Activated CD8-positive, alpha-beta T cell treated with anti-CD3 and anti-CD28 coated beads for 36 hours (primary cell): ENCODE measurements at regions of chr7 and their contacts with region 1.

Region 1: DNA sequence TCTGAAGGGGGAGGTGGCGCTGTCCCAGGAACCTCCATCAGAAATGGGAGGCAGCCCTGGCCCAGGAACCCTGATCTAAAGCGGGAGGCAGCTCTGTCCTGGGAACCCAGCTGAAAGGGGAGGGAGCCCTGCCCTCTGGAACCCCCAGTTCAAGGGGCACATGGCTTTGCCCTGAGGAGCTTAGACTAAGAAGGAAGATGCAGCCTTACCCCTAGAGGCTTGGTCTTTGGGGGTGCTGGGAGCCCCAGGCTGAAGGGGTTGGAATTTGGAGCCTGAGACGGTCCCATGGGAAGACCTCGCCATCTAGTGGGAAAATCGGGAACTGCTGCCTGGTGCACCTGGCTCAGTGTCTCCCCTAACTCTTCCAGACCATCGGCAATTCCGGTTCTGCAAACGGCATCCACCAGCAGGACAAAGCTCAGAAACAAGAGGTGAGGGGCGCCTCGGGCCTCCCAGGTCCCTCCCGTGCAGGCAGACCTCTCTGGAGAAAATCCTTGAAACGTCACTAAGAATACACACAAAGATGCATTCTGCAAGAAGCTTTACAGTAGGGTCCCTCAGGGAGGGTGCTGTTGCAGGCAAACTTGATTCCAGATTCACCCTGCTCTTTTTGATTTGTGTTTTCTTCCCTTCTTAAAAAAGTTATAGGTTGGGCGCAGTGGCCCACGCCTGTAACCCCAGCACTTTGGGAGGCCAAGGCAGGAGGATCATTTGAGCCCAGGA is 52.4 kb upstream of the GTF2IRD1 start:
- DNase-seq: peak; percentile 81
- ATAC-seq: peak; percentile 82
- H3K4me3 Mint-ChIP-seq: no peak overlapping the region
- H3K27ac Mint-ChIP-seq: no peak overlapping the region
- H3K4me1 Mint-ChIP-seq: no peaks in the 10 kb centered on the region
- H3K27me3 Mint-ChIP-seq: no peaks in the 10 kb centered on the region
- CTCF ChIP-seq: peak; percentile 93

Region 2: DNA sequence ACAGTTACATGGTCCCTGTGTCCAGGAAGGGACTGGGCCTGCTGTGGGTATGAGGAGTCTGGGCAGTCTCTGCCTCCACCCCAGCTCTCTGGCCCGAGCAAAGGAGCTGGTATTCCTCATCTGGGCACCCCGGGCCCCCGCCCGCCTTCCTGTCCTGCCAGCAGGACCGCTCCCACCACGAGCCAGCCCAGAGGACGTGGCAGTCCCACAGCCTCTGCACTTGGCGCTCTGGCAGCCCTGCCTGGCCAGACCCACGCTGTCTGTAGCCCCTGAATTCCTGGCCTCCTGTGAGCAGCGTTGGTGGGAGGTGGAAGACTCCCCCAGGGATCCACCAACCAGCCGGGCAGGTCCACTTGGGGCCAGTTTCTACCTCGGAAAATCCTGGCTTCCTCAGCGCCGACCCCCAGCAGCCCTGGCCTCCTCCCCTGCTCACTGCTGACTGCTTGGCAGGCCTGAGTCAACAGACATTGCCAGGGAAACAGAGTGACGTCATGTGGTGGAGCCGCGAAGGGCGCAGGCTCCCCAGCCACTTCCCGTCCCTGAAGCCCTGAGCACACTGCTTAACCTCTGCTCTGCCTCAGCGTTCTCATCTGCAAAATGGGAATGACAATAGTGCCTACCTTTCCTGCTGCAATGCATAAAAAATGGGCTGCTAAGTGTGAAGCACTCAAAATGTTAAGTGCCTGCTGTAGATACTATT is 339.3 kb before region 1 on chr7:
- CTCF ChIA-PET with region 1: interaction called, 10 read pairs
- POLR2A ChIA-PET with region 1: no interaction called
- intact Hi-C with region 1: loop called (anchors 10 kb)
- DNase-seq: peak; percentile 70
- ATAC-seq: peak; percentile 97
- H3K4me3 Mint-ChIP-seq: no peak overlapping the region
- H3K27ac Mint-ChIP-seq: peak overlapping the region; percentile 78
- H3K4me1 Mint-ChIP-seq: peaks cover 5% of the 10 kb centered on the region
- H3K27me3 Mint-ChIP-seq: no peaks in the 10 kb centered on the region
- CTCF ChIP-seq: no peak

Region 3: GRCh38 chr7:74115326-74115725 is 286.0 kb before region 1 on chr7:
- CTCF ChIA-PET with region 1: no interaction called
- POLR2A ChIA-PET with region 1: no interaction called
- intact Hi-C with region 1: no loop called
- DNase-seq: no peak
- ATAC-seq: no peak
- H3K4me3 Mint-ChIP-seq: no peak overlapping the region
- H3K27ac Mint-ChIP-seq: no peak overlapping the region
- H3K4me1 Mint-ChIP-seq: no peaks in the 10 kb centered on the region
- H3K27me3 Mint-ChIP-seq: no peaks in the 10 kb centered on the region
- CTCF ChIP-seq: no peak

Region 4: DNA sequence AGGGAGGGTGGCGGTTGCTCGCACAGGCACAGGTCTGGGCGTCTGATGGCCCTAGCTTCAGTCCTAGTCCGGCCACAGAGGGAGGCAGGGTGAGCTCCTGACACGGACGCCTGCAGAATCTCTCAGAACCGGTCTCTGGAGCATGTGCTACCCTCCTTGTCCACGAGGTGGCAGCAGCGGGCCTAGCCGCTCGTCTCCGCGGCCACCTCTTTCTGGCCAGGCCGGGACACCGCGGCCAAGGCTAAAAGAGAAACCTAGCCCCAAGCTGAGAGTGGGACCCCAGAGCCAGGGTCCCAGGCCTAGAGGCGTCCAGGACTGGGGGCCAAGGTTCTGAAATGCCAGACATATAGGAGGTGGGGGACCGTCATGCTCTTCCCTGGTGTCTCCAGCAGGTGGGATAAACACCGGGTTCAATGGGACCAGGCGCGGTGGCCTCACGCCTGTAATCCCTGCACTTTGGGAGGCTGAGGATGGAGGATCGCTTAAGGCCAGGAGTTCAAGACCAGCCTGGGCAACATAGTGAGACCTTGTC is 194.6 kb before region 1 on chr7:
- CTCF ChIA-PET with region 1: interaction called, 197 read pairs
- POLR2A ChIA-PET with region 1: no interaction called
- intact Hi-C with region 1: loop called (anchors 2 kb)
- DNase-seq: peak; percentile 87
- ATAC-seq: peak; percentile 82
- H3K4me3 Mint-ChIP-seq: no peak overlapping the region
- H3K27ac Mint-ChIP-seq: no peak overlapping the region
- H3K4me1 Mint-ChIP-seq: peaks cover 15% of the 10 kb centered on the region
- H3K27me3 Mint-ChIP-seq: peaks cover 5% of the 10 kb centered on the region
- CTCF ChIP-seq: peak; percentile 99

Region 5: DNA sequence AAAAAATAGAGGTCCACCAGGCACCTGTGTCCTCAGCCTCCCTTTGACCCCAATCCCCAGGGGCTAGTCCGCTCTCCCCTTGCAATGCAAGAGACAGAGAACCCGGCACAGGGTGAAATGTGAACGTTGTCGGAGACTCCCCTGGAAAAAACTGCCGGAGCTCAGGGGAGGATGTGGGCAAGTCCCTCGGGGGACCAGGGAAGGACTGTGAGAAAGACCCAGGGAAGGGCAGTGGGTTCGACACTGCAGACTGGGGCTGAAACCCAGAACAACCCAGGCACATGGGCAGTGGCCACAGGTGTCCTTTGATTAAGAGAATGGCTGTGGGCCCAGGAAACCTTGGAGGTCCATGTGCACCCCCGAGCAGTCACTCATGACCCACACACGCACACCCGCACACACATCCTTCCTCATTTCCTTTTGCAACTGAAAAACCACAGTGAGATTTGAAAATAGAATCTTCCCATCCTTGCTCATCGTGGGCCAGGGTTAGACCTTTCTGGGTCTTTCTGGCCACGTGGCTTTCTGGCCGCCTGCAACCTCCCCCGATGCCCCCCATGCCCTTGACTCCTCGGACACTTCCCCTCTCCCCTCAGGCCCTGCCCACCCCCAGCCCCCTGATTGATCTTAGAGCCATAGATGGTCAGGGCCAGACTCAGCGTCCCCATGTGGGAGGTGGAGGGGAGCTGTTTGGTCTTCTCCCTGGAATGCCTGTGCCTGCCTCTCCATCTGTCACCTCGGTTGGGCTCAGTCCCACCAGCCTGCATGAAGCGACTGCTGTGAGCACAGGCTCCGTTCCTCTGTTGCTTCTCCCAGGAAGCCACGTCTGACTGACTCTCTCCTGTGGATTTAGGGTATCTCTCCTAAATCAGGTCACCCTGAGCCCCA is 183.6 kb before region 1 on chr7:
- CTCF ChIA-PET with region 1: interaction called, 16 read pairs
- POLR2A ChIA-PET with region 1: no interaction called
- intact Hi-C with region 1: no loop called
- DNase-seq: peak; percentile 56
- ATAC-seq: peak; percentile 55
- H3K4me3 Mint-ChIP-seq: peak overlapping the region; percentile 8
- H3K27ac Mint-ChIP-seq: peak overlapping the region; percentile 73
- H3K4me1 Mint-ChIP-seq: peaks cover 16% of the 10 kb centered on the region
- H3K27me3 Mint-ChIP-seq: no peaks in the 10 kb centered on the region
- CTCF ChIP-seq: no peak

Region 6: DNA sequence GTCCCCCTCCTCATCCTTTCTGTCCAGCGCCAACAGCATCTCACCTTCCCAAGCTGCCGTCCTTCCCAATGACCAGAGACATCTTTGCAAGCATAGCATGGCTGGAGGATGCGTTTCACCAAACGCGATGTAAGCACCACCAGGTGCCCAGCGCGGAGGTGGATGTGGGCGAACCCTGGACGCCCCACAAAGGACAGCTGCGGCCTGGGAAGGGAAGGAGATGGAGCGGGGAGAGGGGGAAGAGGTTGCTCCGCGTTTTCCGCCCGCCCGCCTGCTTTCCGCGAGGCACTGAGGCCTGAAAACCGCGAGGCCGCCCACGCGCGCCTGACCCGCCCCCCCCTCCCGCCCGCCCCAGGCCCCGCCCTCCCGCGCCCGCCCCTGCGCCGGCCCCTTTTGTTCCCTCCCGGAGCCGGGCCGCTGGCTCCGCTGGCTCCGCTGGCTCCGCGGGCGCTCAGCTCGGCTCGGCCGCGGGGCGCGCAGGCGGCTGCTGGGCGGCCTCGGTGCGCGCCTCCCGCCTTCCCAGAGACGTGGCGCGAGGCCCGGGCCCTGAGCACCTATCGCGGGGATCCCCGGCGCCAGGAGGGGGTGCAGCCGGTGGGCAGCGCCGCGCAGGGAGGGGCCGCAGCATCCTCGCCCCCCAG is 112.2 kb before region 1 on chr7 and contains the start of gene CLIP2:
- CTCF ChIA-PET with region 1: interaction called, 23 read pairs
- POLR2A ChIA-PET with region 1: no interaction called
- intact Hi-C with region 1: no loop called
- DNase-seq: peak; percentile 74
- ATAC-seq: peak; percentile 89
- H3K4me3 Mint-ChIP-seq: peak within 1 kb of the TSS; percentile 65
- H3K27ac Mint-ChIP-seq: peak within 1 kb of the TSS; percentile 55
- H3K4me1 Mint-ChIP-seq: peaks cover 12% of the 10 kb centered on the region
- H3K27me3 Mint-ChIP-seq: peaks cover 18% of the 10 kb centered on the region
- CTCF ChIP-seq: no peak
- total RNA-seq, gene CLIP2: 1.3 to 1.4 TPM

Region 7: DNA sequence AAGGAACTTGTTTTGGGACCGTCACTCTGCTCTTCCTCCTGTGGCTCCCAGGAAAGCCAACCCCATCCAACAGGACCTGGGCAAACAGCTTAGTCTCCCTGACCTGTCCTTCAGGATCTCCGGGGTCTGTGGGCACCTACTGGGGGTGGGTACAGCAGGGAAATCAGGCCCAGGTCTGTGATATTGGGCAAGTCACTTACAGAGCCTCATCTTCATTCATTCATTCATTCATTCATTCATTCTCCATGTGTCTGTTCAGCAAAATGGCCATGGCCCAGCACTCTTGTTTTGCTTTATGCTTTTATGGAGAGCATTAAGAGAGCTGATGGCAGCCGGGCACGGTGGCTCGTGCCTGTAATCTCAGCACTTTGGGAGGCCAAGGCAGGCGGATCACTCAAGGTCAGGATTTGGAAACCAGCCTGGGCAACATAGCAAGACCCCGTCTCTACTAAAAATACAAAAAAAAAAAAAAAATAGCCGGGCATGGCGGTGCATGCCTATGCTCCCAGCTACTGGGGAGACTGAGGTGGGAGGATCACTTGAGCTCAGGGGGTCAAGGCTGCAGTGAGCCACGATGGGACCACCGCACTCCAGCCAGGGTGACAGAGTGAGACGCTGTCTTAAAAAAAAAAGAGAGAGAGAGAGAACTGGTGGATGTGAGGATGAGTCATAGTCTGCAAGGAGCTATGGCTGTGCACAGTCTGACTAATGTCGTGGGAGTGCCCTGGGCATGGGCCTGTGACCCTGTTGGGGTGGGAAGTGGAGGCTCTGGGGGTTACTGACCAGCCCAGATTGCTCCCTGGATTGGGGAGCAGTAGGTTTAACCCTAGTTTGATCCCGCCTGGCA is 57.8 kb before region 1 on chr7:
- CTCF ChIA-PET with region 1: no interaction called
- POLR2A ChIA-PET with region 1: no interaction called
- intact Hi-C with region 1: no loop called
- DNase-seq: peak; percentile 32
- ATAC-seq: peak; percentile 93
- H3K4me3 Mint-ChIP-seq: no peak overlapping the region
- H3K27ac Mint-ChIP-seq: no peak overlapping the region
- H3K4me1 Mint-ChIP-seq: no peaks in the 10 kb centered on the region
- H3K27me3 Mint-ChIP-seq: no peaks in the 10 kb centered on the region
- CTCF ChIP-seq: no peak

Region 8: GRCh38 chr7:74388880-74389415 is 12.3 kb before region 1 on chr7:
- CTCF ChIA-PET with region 1: interaction called, 18 read pairs
- POLR2A ChIA-PET with region 1: no interaction called
- intact Hi-C with region 1: no loop called
- DNase-seq: no peak
- ATAC-seq: no peak
- H3K4me3 Mint-ChIP-seq: no peak overlapping the region
- H3K27ac Mint-ChIP-seq: no peak overlapping the region
- H3K4me1 Mint-ChIP-seq: no peaks in the 10 kb centered on the region
- H3K27me3 Mint-ChIP-seq: no peaks in the 10 kb centered on the region
- CTCF ChIP-seq: no peak

Region 9: DNA sequence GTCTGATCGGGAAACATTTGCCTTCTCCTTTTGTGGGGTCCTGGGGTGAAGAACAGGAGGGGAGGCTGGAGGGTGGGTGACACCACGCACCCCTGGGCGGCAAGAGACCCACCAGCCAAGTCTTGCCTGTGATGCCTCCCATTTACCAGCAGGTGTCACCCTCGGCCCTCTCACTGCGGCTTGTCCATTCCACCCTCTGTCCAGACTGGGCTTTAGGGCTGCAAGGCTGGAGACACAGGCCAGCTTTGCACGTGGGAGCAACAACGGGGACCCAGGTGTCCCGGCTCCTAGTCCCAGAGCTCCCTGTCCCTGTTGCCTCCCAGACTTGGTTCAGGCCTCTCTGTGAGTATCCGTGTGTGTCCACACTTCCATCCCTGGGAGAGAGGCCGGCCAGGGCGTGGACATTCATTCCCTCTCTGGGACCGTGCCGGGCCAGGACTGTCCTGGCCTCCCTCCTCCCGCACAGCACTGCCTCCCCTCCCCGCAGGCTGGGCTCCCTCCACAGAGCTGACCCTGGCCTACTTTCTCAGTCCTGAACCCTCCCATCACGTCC is 16.2 kb after region 1 on chr7:
- CTCF ChIA-PET with region 1: interaction called, 30 read pairs
- POLR2A ChIA-PET with region 1: no interaction called
- intact Hi-C with region 1: no loop called
- DNase-seq: peak; percentile 62
- ATAC-seq: peak; percentile 87
- H3K4me3 Mint-ChIP-seq: no peak overlapping the region
- H3K27ac Mint-ChIP-seq: no peak overlapping the region
- H3K4me1 Mint-ChIP-seq: no peaks in the 10 kb centered on the region
- H3K27me3 Mint-ChIP-seq: no peaks in the 10 kb centered on the region
- CTCF ChIP-seq: peak; percentile 97

Region 10: DNA sequence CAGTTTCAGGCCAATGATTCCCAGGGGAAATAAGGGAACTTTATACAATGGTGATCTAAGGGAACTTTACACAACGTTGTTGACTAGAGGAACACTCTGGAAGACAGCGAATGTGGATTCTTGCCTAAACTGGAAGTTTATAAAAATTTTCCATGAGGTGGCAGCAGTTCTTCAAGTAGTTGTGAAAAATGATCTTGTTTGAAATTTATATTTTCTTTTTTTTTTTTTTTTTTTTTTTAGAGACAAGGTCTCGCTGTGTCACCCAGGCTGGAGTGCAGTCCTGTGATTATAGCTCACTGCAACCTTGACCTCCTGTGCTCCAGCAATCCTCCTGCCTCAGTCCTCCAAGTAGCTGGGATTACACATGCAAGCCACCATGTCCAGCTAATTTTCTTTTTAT is 224.1 kb after region 1 on chr7:
- CTCF ChIA-PET with region 1: no interaction called
- POLR2A ChIA-PET with region 1: no interaction called
- intact Hi-C with region 1: no loop called
- DNase-seq: no peak
- ATAC-seq: no peak
- H3K4me3 Mint-ChIP-seq: no peak overlapping the region
- H3K27ac Mint-ChIP-seq: no peak overlapping the region
- H3K4me1 Mint-ChIP-seq: no peaks in the 10 kb centered on the region
- H3K27me3 Mint-ChIP-seq: no peaks in the 10 kb centered on the region
- CTCF ChIP-seq: no peak